BJ (cell line): ENCODE measurements at regions of chr16 and their contacts with region 1.

Region 1: DNA sequence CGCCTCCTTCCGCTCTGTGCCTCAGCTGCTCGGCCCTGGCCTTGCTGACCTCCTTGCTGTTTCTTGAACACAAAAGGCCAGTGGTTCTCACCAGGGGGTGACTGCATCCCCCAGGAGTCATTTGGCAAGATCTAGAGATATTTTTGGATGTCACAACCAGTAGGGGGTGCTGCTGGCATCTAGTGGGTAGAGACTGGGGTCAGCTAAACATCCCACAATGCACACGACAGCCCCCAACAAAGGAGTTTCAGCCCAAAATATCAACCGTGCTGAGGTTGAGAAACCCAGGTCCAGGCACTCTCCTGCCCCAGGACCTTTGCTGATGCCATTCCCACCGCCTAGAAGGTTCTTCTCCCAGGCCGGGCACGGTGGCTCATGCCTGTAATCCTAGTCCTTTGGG is 39.7 kb downstream of the ABCC6 start:
- DNase-seq: no peak
- H3K4me3 ChIP-seq: no peak overlapping the region
- H3K27me3 ChIP-seq: 0 out of 2 replicates have a peak, but pooled peaks cover 1% of the 10 kb centered on the region
- CTCF ChIP-seq: 0 out of 2 replicates have a peak, but pooled peaks have one; percentile 18

Region 2: GRCh38 chr16:14549789-14550153 is 1633.8 kb before region 1 on chr16:
- CTCF ChIA-PET with region 1: no interaction called
- POLR2A ChIA-PET with region 1: interaction called, 16 read pairs
- DNase-seq: no peak
- H3K4me3 ChIP-seq: no peak overlapping the region
- H3K27me3 ChIP-seq: no peaks in the 10 kb centered on the region
- CTCF ChIP-seq: no peak